Posterior vena cava (tissue), 2 donors: ENCODE measurements at regions of chr21 and their contacts with region 1.

Region 1: GRCh38 chr21:36917471-36918158 is 48.9 kb downstream of the HLCS start:
- DNase-seq: no peak

Region 2: DNA sequence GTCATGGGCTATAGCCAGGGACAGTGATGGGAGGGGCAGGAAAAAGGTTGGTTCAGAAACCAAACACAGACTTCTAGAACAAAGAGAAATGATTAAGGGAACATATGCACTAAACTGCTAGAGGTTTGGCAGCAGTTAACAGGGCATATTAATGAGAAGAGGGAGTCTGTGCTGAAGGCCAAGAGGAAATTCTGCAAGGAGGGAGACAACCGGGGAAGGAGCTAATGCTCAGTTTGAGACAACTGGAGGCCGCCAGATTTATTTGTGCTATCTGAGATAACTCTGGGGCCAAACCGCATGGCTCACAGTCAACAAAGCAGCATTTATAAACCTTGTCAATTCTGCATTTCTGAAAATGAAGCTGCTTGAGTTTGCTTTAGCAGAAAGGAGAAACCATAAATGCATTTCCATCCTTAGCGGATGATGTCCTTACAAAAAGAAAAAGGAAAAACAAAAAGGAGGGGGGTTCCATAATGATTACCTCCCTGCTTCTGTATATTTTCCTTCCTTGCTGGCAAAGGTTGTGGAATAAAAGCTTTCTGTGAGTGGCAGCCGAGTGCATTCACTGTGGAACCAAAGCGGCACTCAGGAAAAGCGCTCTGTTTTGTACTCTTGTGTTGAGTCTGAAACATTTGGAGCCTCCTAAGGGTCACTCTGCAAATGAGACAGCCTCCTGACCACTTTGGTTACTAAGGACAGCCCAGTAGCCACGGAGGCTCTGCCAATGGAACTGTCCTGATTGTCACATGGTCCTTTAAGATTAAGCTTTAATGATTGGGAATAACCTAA is 148.4 kb before region 1 on chr21:
- intact Hi-C with region 1: loop called in 1 of 2 experiments (anchors 10 kb)
- DNase-seq: no peak